CD8-positive, alpha-beta T cell (primary cell): ENCODE measurements at regions of chr19 and their contacts with region 1.

Region 1: DNA sequence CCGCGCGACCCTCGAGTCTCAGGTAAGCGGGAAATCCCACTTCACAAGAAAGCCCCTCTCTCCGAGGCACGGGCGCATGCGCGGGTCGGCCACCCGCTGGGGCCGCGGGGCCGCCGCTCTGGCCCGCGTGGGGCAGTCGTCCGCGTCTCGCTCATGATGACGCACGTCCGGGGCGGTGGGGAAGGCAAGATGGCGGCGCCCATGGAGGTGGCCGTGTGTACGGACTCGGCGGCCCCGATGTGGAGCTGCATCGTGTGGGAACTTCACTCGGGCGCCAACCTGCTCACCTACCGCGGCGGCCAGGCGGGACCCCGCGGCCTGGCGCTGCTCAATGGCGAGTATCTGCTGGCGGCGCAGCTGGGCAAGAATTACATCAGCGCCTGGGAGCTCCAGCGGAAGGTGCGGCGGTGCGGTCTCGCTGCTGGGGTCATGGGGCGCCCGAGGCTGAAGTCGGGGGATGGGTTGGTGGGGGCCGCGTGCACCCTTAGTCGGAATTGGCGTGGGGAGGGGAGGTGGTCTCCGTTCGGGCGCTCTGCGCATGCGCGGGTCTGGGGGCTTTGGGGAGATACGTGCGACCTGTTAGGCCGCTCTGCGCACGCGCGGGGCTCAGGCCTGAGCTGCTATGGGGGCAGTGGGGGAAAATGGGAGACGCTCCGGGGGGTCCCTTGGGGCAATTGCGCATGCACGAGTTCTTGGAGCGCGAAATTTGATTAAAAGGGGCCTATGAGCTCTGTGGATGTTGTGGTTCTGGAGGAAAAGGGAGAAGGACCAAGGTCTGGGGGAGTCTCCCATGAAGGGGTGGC is at the start of gene WDR18:
- DNase-seq: peak; percentile 68 to 94 (median 90)
- ATAC-seq: peak; percentile 85
- H3K4me3 ChIP-seq: peak within 1 kb of the TSS; percentile 92 to 93
- H3K4me3 Mint-ChIP-seq: peak within 1 kb of the TSS; percentile 91
- H3K27ac ChIP-seq: peak within 1 kb of the TSS; percentile 78 to 87
- H3K27ac Mint-ChIP-seq: peak within 1 kb of the TSS; percentile 86
- H3K4me1 ChIP-seq: peaks cover 19% of the 10 kb centered on the region
- H3K4me1 Mint-ChIP-seq: peaks cover 12% of the 10 kb centered on the region
- H3K27me3 ChIP-seq: no peaks in the 10 kb centered on the region
- H3K27me3 Mint-ChIP-seq: no peaks in the 10 kb centered on the region
- CTCF ChIP-seq: no peak
- total RNA-seq, gene WDR18: 20.6 to 22.7 TPM

Region 2: GRCh38 chr19:920051-920864 is 64.1 kb before region 1 on chr19:
- CTCF ChIA-PET with region 1: interaction called, 175 read pairs
- POLR2A ChIA-PET with region 1: interaction called, 28 read pairs
- intact Hi-C with region 1: loop called in 1 of 2 experiments (anchors 1 kb)
- DNase-seq: peak in 8 of 9 experiments; percentile 58 to 84 (median 80)
- ATAC-seq: peak; percentile 48
- H3K4me3 ChIP-seq: peak overlapping the region; percentile 40 to 57
- H3K4me3 Mint-ChIP-seq: peak overlapping the region; percentile 82
- H3K27ac ChIP-seq: peak overlapping the region in 1 of 2 experiments; percentile 21
- H3K27ac Mint-ChIP-seq: peak overlapping the region; percentile 93
- H3K4me1 ChIP-seq: peaks cover 48% of the 10 kb centered on the region
- H3K4me1 Mint-ChIP-seq: peaks cover 25% of the 10 kb centered on the region
- H3K27me3 ChIP-seq: peaks cover 0 to 29% of the 10 kb centered on the region in 2 experiments
- H3K27me3 Mint-ChIP-seq: no peaks in the 10 kb centered on the region
- CTCF ChIP-seq: no peak

Region 3: DNA sequence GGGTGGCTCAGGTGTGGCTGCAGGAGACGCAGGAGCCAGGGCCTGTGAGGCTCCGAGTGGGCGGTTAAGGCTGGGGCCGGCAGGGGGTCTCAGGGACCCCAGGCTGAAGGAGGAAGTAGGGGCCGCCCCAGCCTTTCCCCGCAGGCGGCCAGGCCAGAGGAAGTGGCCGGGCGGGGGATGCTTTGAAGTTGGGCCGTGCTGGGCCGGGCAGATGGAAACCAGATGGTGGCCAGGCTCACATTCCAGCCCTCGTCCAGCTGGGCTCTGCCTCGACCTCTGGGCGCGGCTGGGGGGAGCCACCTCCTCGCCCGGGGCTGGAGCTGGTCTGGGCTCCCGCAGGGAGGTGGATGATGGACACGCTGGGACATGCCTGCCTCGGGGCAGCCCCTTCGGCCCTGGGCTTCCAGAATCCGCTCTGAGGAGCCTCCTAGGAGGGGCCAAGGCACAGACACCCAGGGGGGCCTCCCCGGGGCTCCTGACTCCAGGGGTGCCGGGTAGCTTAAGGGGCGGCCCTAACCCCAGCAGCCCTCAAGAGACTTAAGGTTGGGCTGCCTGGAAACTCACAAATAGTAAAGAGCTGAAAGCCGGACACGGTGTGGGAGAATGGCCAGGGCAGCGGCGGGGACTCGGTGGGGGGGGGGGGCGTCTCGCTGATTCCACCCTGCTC is 51.0 kb before region 1 on chr19:
- CTCF ChIA-PET with region 1: interaction called, 22 read pairs
- POLR2A ChIA-PET with region 1: interaction called, 5 read pairs
- intact Hi-C with region 1: no loop called
- DNase-seq: no peak
- ATAC-seq: no peak
- H3K4me3 ChIP-seq: peak overlapping the region in 1 of 2 experiments; percentile 8
- H3K4me3 Mint-ChIP-seq: peak overlapping the region; percentile 71
- H3K27ac ChIP-seq: no peak overlapping the region
- H3K27ac Mint-ChIP-seq: no peak overlapping the region
- H3K4me1 ChIP-seq: peaks cover 34% of the 10 kb centered on the region
- H3K4me1 Mint-ChIP-seq: peaks cover 29% of the 10 kb centered on the region
- H3K27me3 ChIP-seq: no peaks in the 10 kb centered on the region
- H3K27me3 Mint-ChIP-seq: no peaks in the 10 kb centered on the region
- CTCF ChIP-seq: no peak

Region 4: DNA sequence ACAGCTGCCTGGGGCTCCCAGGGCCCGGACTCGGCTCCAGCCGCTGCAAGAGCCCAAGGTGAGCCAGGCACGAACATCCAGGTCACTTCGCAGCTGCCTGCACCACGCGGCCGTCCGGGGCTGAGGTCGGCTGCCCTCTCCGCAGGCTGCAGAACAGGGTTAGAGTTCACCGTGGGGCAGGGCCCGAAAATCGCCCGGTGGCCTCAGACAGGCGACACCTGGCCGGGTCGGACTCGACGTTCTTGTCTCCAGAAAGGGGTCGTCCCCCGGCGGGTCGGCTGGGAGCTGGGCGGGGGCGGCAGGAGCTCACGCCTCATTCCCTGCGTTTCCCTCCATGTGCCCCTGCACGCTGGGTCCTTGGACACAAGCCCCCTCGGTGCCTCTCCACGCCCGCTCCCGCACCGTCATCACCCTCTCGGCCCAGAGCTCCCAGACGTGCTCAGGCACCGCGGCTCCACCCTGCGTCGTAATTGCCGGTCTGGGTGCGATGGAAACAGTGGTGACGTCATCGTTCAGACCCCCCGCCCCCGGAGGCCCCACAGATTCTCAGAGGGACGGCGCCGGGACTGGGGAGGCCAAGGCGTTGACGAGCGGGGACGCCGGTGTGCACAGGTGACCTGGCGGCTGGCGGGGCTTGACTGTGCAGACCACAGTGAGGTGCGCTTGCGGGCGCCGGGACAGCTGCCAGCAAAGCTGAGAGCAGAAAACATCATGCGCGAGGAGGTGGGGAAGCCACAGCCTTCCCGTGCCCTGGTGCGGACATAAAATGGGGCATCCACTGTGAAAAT is 11.9 kb after region 1 on chr19:
- CTCF ChIA-PET with region 1: interaction called, 13 read pairs
- POLR2A ChIA-PET with region 1: interaction called, 10 read pairs
- intact Hi-C with region 1: loop called in 1 of 2 experiments (anchors 1 kb)
- DNase-seq: peak; percentile 44 to 97 (median 84)
- ATAC-seq: peak; percentile 79
- H3K4me3 ChIP-seq: peak overlapping the region; percentile 29 to 36
- H3K4me3 Mint-ChIP-seq: peak overlapping the region; percentile 72
- H3K27ac ChIP-seq: peak overlapping the region; percentile 16 to 27
- H3K27ac Mint-ChIP-seq: peak overlapping the region; percentile 92
- H3K4me1 ChIP-seq: peaks cover 27% of the 10 kb centered on the region
- H3K4me1 Mint-ChIP-seq: peaks cover 13% of the 10 kb centered on the region
- H3K27me3 ChIP-seq: peaks cover 15 to 22% of the 10 kb centered on the region in 2 experiments
- H3K27me3 Mint-ChIP-seq: peaks cover 15% of the 10 kb centered on the region
- CTCF ChIP-seq: no peak

Region 5: GRCh38 chr19:1020868-1021425 is 36.6 kb after region 1 on chr19 and contains the start of gene TMEM259:
- CTCF ChIA-PET with region 1: interaction called, 7 read pairs
- POLR2A ChIA-PET with region 1: interaction called, 3 read pairs
- intact Hi-C with region 1: loop called in 1 of 2 experiments (anchors 1 kb)
- DNase-seq: peak; percentile 94 to 98 (median 98)
- ATAC-seq: peak; percentile 86
- H3K4me3 ChIP-seq: peak within 1 kb of the TSS; percentile 89 to 94
- H3K4me3 Mint-ChIP-seq: peak within 1 kb of the TSS; percentile 90
- H3K27ac ChIP-seq: peak within 1 kb of the TSS; percentile 97 to 99
- H3K27ac Mint-ChIP-seq: peak within 1 kb of the TSS; percentile 100
- H3K4me1 ChIP-seq: peaks cover 43% of the 10 kb centered on the region
- H3K4me1 Mint-ChIP-seq: peaks cover 45% of the 10 kb centered on the region
- H3K27me3 ChIP-seq: no peaks in the 10 kb centered on the region
- H3K27me3 Mint-ChIP-seq: no peaks in the 10 kb centered on the region
- CTCF ChIP-seq: no peak
- total RNA-seq, gene TMEM259: 408 to 443 TPM